Colonic mucosa (tissue), 4 donors: ENCODE measurements at regions of chr1 and their contacts with region 1.

Region 1: GRCh38 chr1:209576798-209577197 is 6.7 kb upstream of the CAMK1G start:
- DNase-seq: peak; percentile 88
- H3K4me3 ChIP-seq: no peak overlapping the region
- H3K27ac ChIP-seq: no peak overlapping the region
- H3K4me1 ChIP-seq: no peaks in the 10 kb centered on the region
- H3K27me3 ChIP-seq: no peaks in the 10 kb centered on the region
- CTCF ChIP-seq: peak; percentile 89

Region 2: GRCh38 chr1:208270651-208271111 is 1306.1 kb before region 1 on chr1:
- intact Hi-C with region 1: no loop called
- DNase-seq: no peak
- H3K4me3 ChIP-seq: no peak overlapping the region
- H3K27ac ChIP-seq: no peak overlapping the region
- H3K4me1 ChIP-seq: no peaks in the 10 kb centered on the region
- H3K27me3 ChIP-seq: no peaks in the 10 kb centered on the region
- CTCF ChIP-seq: no peak

Region 3: GRCh38 chr1:208587110-208587509 is 989.7 kb before region 1 on chr1:
- intact Hi-C with region 1: no loop called
- DNase-seq: no peak
- H3K4me3 ChIP-seq: no peak overlapping the region
- H3K27ac ChIP-seq: no peak overlapping the region
- H3K4me1 ChIP-seq: no peaks in the 10 kb centered on the region
- H3K27me3 ChIP-seq: no peaks in the 10 kb centered on the region
- CTCF ChIP-seq: no peak

Region 4: DNA sequence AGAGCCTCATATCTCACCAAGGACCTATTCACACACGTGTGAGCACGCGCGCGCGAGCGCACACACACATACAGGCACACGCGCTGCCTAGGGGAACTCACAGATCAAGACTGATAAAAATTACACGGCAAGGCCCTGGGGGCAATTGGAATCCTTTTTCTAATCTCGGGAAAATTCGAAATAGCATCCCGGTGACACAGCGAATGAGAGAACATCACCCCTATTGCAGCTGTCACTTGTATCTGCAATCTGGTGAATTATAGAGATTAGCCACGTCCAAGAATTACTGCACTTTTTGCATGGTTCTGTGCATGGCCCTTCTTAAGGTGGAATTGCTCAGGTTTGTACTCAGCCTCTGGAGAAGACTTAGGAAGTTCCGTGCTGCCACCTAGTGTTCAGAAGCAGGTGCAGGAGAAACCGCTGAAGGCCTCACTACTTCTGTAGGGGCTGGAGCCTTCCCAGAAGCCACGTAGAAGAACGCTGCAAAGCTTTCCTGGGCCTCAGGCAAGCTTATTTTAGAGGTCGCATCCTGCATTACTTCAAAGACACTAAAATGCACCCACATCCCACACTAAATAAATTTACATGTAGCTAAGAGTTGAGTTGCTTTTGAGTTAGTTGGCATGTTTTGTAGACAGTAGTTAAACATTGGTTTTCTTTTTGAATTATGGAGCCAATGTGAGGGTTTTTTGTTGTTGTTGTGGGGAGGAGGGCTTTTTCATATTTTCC is 222.5 kb before region 1 on chr1:
- intact Hi-C with region 1: no loop called
- DNase-seq: peak; percentile 72
- H3K4me3 ChIP-seq: no peak overlapping the region
- H3K27ac ChIP-seq: no peak overlapping the region
- H3K4me1 ChIP-seq: no peaks in the 10 kb centered on the region
- H3K27me3 ChIP-seq: no peaks in the 10 kb centered on the region
- CTCF ChIP-seq: peak; percentile 76

Region 5: DNA sequence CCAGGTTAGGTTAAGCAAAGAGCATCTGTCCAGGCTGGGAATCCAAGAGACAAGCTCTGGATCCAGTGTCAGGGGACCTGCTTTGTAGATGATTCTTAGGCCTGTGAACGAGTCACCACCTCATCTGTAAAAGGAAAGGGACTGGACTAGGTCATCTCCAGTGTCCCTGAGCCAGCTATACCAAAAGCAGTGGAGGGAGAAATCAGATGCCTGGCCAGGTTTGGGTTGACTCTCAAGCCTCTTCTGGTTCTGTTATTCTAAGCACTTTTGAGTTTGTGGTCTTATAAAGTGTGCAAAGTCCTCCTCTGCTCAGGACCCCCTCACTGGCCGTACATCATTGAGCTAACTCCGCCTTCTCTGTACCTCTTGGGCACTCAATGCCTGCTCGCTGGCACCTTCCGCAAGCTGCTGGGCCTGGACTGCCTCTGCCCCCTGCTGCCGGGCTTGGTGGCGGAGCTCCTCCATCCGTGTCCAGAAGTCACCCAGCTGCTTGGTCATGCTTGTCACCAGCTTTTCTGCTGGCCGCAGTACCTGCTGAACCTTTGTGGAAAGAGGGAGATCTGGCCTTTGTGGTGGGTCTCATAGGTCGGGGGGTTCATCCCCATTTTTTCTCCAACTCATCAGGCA is 40.4 kb after region 1 on chr1:
- intact Hi-C with region 1: no loop called
- DNase-seq: no peak
- H3K4me3 ChIP-seq: no peak overlapping the region
- H3K27ac ChIP-seq: no peak overlapping the region
- H3K4me1 ChIP-seq: no peaks in the 10 kb centered on the region
- H3K27me3 ChIP-seq: no peaks in the 10 kb centered on the region
- CTCF ChIP-seq: no peak

Region 6: GRCh38 chr1:209627732-209628196 is 51.0 kb after region 1 on chr1:
- intact Hi-C with region 1: loop called (anchors 5 kb)
- DNase-seq: peak; percentile 80
- H3K4me3 ChIP-seq: no peak overlapping the region
- H3K27ac ChIP-seq: no peak overlapping the region
- H3K4me1 ChIP-seq: no peaks in the 10 kb centered on the region
- H3K27me3 ChIP-seq: no peaks in the 10 kb centered on the region
- CTCF ChIP-seq: peak; percentile 90

Region 7: GRCh38 chr1:209747580-209748262 is 170.9 kb after region 1 on chr1:
- intact Hi-C with region 1: loop called (anchors 5 kb)
- DNase-seq: peak; percentile 95
- H3K4me3 ChIP-seq: peak overlapping the region; percentile 8
- H3K27ac ChIP-seq: no peak overlapping the region
- H3K4me1 ChIP-seq: peaks cover 4% of the 10 kb centered on the region
- H3K27me3 ChIP-seq: no peaks in the 10 kb centered on the region
- CTCF ChIP-seq: peak; percentile 95